IMR-90 (cell line): ENCODE measurements at regions of chr4 and their contacts with region 1.

Region 1: GRCh38 chr4:172900930-172901329 is 267.7 kb upstream of the GALNT7 start:
- DNase-seq: no peak
- ATAC-seq: no peak
- H3K4me3 ChIP-seq: no peak overlapping the region
- H3K27ac ChIP-seq: no peak overlapping the region
- H3K4me1 ChIP-seq: no peaks in the 10 kb centered on the region
- H3K27me3 ChIP-seq: peaks cover 2% of the 10 kb centered on the region; the same call in 1 of the 2 replicates
- CTCF ChIP-seq: no peak
- POLR2A ChIP-seq: no peak
- RAD21 ChIP-seq: no peak

Region 2: DNA sequence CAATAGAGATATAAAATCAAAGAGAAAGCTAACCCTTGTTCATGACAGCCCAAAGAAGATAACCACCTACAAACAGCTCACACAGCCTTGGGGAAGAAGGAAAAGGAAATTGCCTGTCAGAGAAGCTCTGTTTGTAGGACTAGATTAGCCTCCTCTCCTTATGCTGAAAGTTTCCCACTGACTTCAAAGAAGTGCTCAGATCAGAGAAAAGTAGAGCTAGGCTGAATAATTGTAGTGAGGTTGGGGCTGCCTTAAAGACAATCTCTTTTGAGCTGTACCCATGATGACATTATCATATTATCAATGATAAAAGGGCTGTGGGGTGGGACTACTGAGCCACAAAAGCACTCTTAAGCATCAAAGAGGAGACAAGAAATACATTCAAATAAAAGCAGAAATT is 44.7 kb after region 1 on chr4:
- CTCF ChIA-PET with region 1: no interaction called
- POLR2A ChIA-PET with region 1: no interaction called
- dilution Hi-C with region 1: no loop called
- in situ Hi-C with region 1: no loop called
- intact Hi-C with region 1: loop called (anchors 1 kb)
- DNase-seq: no peak
- ATAC-seq: no peak
- H3K4me3 ChIP-seq: no peak overlapping the region
- H3K27ac ChIP-seq: no peak overlapping the region
- H3K4me1 ChIP-seq: no peaks in the 10 kb centered on the region
- H3K27me3 ChIP-seq: peaks cover 7% of the 10 kb centered on the region
- CTCF ChIP-seq: no peak
- POLR2A ChIP-seq: no peak
- RAD21 ChIP-seq: no peak